ENCODE measurements at regions of chr11 and their contacts with region 1.

Region 1: GRCh38 chr11:100930185-100930778 is 199.3 kb downstream of the PGR start:
- DNase-seq: peak in 1 of 2 experiments; percentile 66
- H3K4me3 ChIP-seq: no peak overlapping the region
- H3K4me3 Mint-ChIP-seq: no peak overlapping the region
- H3K27ac Mint-ChIP-seq: no peak overlapping the region
- H3K4me1 ChIP-seq: peaks cover 14% of the 10 kb centered on the region; the same call in 1 of the 2 replicates
- H3K4me1 Mint-ChIP-seq: peaks cover 7% of the 10 kb centered on the region
- H3K27me3 ChIP-seq: no peaks in the 10 kb centered on the region
- H3K27me3 Mint-ChIP-seq: no peaks in the 10 kb centered on the region
- CTCF ChIP-seq: peak; percentile 73 to 75

Region 2: GRCh38 chr11:99410636-99411035 is 1519.6 kb before region 1 on chr11:
- CTCF ChIA-PET with region 1: no interaction called
- POLR2A ChIA-PET with region 1: no interaction called
- intact Hi-C with region 1: no loop called
- DNase-seq: no peak
- H3K4me3 ChIP-seq: no peak overlapping the region
- H3K4me3 Mint-ChIP-seq: no peak overlapping the region
- H3K27ac Mint-ChIP-seq: no peak overlapping the region
- H3K4me1 ChIP-seq: no peaks in the 10 kb centered on the region
- H3K4me1 Mint-ChIP-seq: no peaks in the 10 kb centered on the region
- H3K27me3 ChIP-seq: no peaks in the 10 kb centered on the region
- H3K27me3 Mint-ChIP-seq: peaks cover 2% of the 10 kb centered on the region
- CTCF ChIP-seq: no peak

Region 3: GRCh38 chr11:100214791-100215190 is 715.5 kb before region 1 on chr11:
- CTCF ChIA-PET with region 1: no interaction called
- POLR2A ChIA-PET with region 1: no interaction called
- intact Hi-C with region 1: loop called (anchors 10 kb)
- DNase-seq: no peak
- H3K4me3 ChIP-seq: no peak overlapping the region
- H3K4me3 Mint-ChIP-seq: no peak overlapping the region
- H3K27ac Mint-ChIP-seq: no peak overlapping the region
- H3K4me1 ChIP-seq: no peaks in the 10 kb centered on the region
- H3K4me1 Mint-ChIP-seq: no peaks in the 10 kb centered on the region
- H3K27me3 ChIP-seq: no peaks in the 10 kb centered on the region
- H3K27me3 Mint-ChIP-seq: no peaks in the 10 kb centered on the region
- CTCF ChIP-seq: no peak

Region 4: DNA sequence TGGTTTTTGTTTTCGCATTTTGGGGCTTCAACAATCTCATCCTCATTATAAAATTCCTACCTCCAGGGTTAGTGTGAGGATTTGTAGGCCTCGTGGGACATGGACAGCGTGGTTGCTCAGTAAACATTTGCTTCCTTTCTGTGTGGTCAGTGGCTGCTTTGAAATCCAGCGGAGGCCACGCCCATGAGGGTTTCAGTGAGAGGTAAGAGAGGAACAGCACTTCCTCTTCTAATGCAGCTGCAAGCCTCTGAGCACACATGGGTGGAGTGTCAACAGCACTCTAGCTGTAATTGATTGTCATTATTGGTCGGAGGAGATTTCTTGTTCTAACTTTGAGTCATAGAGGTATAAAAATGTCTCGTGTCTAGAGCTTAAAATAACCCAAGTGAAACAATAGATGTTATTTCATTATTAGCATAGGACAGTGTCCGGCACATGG is 249.2 kb before region 1 on chr11:
- CTCF ChIA-PET with region 1: interaction called, 3 read pairs
- POLR2A ChIA-PET with region 1: interaction called, 4 read pairs
- intact Hi-C with region 1: loop called (anchors 1 kb)
- DNase-seq: peak; percentile 81 to 86
- H3K4me3 ChIP-seq: no peak overlapping the region
- H3K4me3 Mint-ChIP-seq: peak overlapping the region; percentile 34
- H3K27ac Mint-ChIP-seq: peak overlapping the region; percentile 71
- H3K4me1 ChIP-seq: no peaks in the 10 kb centered on the region; the same call in 1 of the 2 replicates
- H3K4me1 Mint-ChIP-seq: peaks cover 13% of the 10 kb centered on the region
- H3K27me3 ChIP-seq: no peaks in the 10 kb centered on the region
- H3K27me3 Mint-ChIP-seq: no peaks in the 10 kb centered on the region
- CTCF ChIP-seq: no peak

Region 5: DNA sequence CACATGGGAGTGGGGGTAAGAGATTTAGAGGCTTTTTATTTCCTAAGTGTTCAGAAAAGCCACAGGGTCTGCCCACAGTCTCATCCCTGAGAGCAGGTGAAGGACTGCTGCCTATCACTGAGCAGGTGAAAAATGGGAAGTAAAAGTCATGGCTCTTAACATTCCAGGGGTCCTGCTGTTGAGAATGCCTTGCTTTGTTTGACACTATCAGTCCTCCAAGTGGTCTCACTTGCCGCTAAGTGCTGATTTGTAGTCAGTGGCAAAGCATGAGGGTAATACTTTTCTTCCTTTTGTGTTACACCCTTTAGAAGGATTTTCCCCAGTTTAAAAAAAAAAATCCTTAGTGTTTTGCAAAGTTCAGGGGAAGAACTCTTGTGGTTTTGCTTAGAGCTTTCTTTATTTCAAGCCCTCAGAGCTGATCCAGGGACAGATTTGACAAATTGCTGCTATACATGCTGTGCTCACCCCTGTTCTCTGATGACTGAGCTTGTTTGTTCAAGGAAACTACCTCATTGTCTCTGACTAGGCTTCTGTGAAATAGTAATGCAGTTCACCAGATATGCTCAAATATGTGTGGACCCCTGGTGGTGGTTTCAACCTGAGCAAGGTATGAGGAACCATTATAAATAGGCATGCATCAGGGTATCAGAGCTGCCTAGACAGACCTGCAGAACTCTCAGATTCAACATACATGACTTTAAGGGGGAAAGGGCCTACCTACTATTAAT is 102.2 kb before region 1 on chr11:
- CTCF ChIA-PET with region 1: no interaction called
- POLR2A ChIA-PET with region 1: no interaction called
- intact Hi-C with region 1: loop called (anchors 1 kb)
- DNase-seq: peak; percentile 82 to 85
- H3K4me3 ChIP-seq: no peak overlapping the region
- H3K4me3 Mint-ChIP-seq: no peak overlapping the region
- H3K27ac Mint-ChIP-seq: peak overlapping the region; percentile 73
- H3K4me1 ChIP-seq: peaks cover 36% of the 10 kb centered on the region
- H3K4me1 Mint-ChIP-seq: peaks cover 29% of the 10 kb centered on the region
- H3K27me3 ChIP-seq: no peaks in the 10 kb centered on the region
- H3K27me3 Mint-ChIP-seq: no peaks in the 10 kb centered on the region
- CTCF ChIP-seq: peak; percentile 79 to 90

Region 6: GRCh38 chr11:100861223-100861622 is 69.1 kb before region 1 on chr11:
- CTCF ChIA-PET with region 1: no interaction called
- POLR2A ChIA-PET with region 1: no interaction called
- intact Hi-C with region 1: loop called (anchors 1 kb)
- DNase-seq: peak; percentile 60 to 78
- H3K4me3 ChIP-seq: no peak overlapping the region
- H3K4me3 Mint-ChIP-seq: peak overlapping the region; percentile 9
- H3K27ac Mint-ChIP-seq: peak overlapping the region; percentile 39
- H3K4me1 ChIP-seq: peaks cover 51% of the 10 kb centered on the region
- H3K4me1 Mint-ChIP-seq: peaks cover 29% of the 10 kb centered on the region
- H3K27me3 ChIP-seq: no peaks in the 10 kb centered on the region
- H3K27me3 Mint-ChIP-seq: no peaks in the 10 kb centered on the region
- CTCF ChIP-seq: no peak

Region 7: GRCh38 chr11:100942016-100942415 is 11.7 kb after region 1 on chr11:
- CTCF ChIA-PET with region 1: no interaction called
- POLR2A ChIA-PET with region 1: no interaction called
- intact Hi-C with region 1: no loop called
- DNase-seq: no peak
- H3K4me3 ChIP-seq: no peak overlapping the region
- H3K4me3 Mint-ChIP-seq: no peak overlapping the region
- H3K27ac Mint-ChIP-seq: no peak overlapping the region
- H3K4me1 ChIP-seq: no peaks in the 10 kb centered on the region
- H3K4me1 Mint-ChIP-seq: peaks cover 9% of the 10 kb centered on the region
- H3K27me3 ChIP-seq: no peaks in the 10 kb centered on the region
- H3K27me3 Mint-ChIP-seq: no peaks in the 10 kb centered on the region
- CTCF ChIP-seq: no peak

Measured in Caco-2 (cell line).